Prostate gland (tissue), 2 donors: ENCODE measurements at regions of chr20 and their contacts with region 1.

Region 1: GRCh38 chr20:44310664-44311639 is at the start of gene FITM2:
- DNase-seq: peak; percentile 97
- H3K4me3 ChIP-seq: peak within 1 kb of the TSS; percentile 68 to 92
- H3K27ac ChIP-seq: peak within 1 kb of the TSS; percentile 52 to 67
- H3K4me1 ChIP-seq: peaks cover 7% of the 10 kb centered on the region
- H3K27me3 ChIP-seq: no peaks in the 10 kb centered on the region
- CTCF ChIP-seq: peak; percentile 87 to 99 (median 98)
- POLR2A ChIP-seq: peak; percentile 48
- total RNA-seq, gene FITM2: 11.6 to 24.2 TPM

Region 2: DNA sequence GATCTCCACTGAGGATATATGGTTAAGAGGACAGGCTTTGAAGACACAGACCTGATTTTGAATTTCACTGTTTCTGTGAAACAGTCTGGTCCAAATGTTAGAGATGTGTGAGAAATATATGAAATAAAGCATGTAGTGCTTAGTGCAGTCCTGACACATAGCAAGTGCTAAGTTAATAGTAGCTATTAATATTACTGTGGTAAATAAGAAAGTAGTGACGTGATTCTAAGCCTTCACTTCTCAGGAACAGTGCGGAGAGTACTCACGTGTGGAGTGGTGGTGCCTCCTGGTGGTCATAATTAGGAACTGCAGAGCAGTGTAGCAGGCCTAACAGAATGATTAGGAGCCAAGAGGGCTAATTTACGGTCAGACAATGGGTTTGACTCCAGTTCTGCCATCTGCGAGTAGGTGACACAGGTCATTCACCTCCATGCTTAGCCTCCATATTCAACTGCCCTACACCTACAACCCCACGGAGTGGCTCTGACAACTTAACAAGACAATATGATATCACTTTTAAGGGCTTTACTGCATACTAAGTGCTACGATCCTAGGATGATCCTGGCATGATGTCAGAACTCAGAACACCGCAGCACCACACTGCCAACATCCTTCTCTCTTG is 230.2 kb before region 1 on chr20:
- intact Hi-C with region 1: no loop called
- DNase-seq: peak; percentile 66
- H3K4me3 ChIP-seq: no peak overlapping the region
- H3K27ac ChIP-seq: no peak overlapping the region
- H3K4me1 ChIP-seq: no peaks in the 10 kb centered on the region
- H3K27me3 ChIP-seq: no peaks in the 10 kb centered on the region
- CTCF ChIP-seq: peak; percentile 97 to 100 (median 99)
- POLR2A ChIP-seq: no peak

Region 3: DNA sequence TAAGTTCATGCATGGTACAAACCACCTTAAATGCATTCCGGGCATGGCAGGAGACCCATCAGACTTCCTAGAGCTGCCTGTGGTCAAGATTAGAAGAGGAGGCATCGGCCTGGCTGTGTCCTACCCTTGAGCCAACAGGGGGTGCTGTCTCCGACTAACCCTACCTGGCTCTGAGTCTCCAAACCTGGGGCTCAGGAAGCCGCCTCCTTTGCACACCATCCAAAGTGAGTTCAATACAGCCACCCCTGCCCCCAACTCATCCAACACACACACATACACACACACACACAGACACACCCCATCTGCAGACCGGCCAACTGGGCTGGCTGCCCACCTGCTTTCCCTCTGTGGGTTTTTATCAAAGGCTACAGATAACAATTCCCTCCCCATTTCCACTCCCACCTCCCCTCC is 201.0 kb before region 1 on chr20:
- intact Hi-C with region 1: loop called (anchors 5 kb)
- DNase-seq: no peak
- H3K4me3 ChIP-seq: no peak overlapping the region
- H3K27ac ChIP-seq: no peak overlapping the region
- H3K4me1 ChIP-seq: no peaks in the 10 kb centered on the region
- H3K27me3 ChIP-seq: no peaks in the 10 kb centered on the region
- CTCF ChIP-seq: no peak
- POLR2A ChIP-seq: no peak

Region 4: GRCh38 chr20:44231713-44232468 is 79.1 kb before region 1 on chr20:
- intact Hi-C with region 1: no loop called
- DNase-seq: no peak
- H3K4me3 ChIP-seq: no peak overlapping the region
- H3K27ac ChIP-seq: no peak overlapping the region
- H3K4me1 ChIP-seq: no peaks in the 10 kb centered on the region
- H3K27me3 ChIP-seq: no peaks in the 10 kb centered on the region
- CTCF ChIP-seq: no peak
- POLR2A ChIP-seq: no peak